ENCODE measurements at regions of chr6 and their contacts with region 1.

Region 1: DNA sequence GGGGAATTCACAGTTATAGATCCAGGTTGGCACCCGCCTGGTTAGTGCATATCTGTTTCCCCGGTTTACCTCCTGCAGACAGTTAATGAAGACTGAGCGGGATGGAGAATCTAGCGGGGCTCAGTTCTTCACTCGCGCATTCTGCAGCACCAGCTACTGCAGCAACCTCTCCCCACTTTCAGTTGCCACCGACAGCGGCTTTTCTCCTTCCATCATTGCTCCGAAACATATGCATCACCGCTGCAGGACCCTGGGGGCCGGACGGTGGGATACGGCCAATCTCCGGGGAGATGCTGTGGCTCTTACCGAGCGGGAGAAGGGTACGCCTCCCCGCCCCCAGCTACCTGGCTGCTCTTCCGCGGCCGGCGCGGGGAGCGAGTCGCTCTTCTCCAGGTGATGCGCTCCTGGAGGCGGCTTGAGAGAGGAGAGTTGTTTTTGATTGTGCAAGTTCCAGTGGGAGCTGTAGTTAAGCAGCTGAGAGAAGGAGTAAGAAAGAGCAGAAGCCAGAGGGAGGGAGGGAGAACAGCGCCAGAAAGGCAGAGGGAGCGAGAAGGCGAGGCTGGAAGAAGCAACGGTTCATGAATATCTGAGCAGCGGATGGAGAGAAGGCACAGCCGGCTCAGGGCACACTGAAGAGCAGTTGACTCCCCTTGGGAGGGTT is at the start of gene SGK1:
- DNase-seq: peak; percentile 43
- H3K4me3 Mint-ChIP-seq: peak within 1 kb of the TSS; percentile 85
- H3K27ac Mint-ChIP-seq: peak within 1 kb of the TSS; percentile 14
- H3K4me1 Mint-ChIP-seq: peaks cover 36% of the 10 kb centered on the region
- H3K27me3 Mint-ChIP-seq: peaks cover 21% of the 10 kb centered on the region
- total RNA-seq, gene SGK1: 202 to 208 TPM

Region 2: GRCh38 chr6:134182528-134182927 is 135.1 kb before region 1 on chr6:
- CTCF ChIA-PET with region 1: no interaction called
- intact Hi-C with region 1: no loop called
- DNase-seq: no peak
- H3K4me3 Mint-ChIP-seq: no peak overlapping the region
- H3K27ac Mint-ChIP-seq: no peak overlapping the region
- H3K4me1 Mint-ChIP-seq: peaks cover 19% of the 10 kb centered on the region
- H3K27me3 Mint-ChIP-seq: no peaks in the 10 kb centered on the region

Region 3: DNA sequence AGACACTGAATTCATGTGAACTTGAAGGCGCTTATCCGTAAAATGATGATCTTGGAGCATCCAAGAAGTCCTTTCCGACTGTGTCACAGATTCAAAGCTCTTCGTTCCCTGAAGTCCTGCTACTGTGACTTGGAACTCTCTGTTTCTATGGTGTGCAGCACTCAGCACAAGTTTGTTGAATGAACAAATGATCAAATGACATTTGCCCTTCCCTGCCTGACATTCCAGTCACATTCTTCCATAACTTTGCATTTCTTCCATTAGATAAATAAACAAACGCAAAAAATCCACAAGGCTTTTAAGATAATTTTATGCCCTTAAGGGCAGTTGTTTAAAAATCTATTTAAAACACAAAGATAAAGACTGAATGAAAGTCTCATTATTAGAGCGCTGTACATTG is 39.6 kb before region 1 on chr6:
- CTCF ChIA-PET with region 1: no interaction called
- intact Hi-C with region 1: loop called (anchors 2 kb)
- DNase-seq: no peak
- H3K4me3 Mint-ChIP-seq: no peak overlapping the region
- H3K27ac Mint-ChIP-seq: no peak overlapping the region
- H3K4me1 Mint-ChIP-seq: peaks cover 25% of the 10 kb centered on the region
- H3K27me3 Mint-ChIP-seq: no peaks in the 10 kb centered on the region

Region 4: DNA sequence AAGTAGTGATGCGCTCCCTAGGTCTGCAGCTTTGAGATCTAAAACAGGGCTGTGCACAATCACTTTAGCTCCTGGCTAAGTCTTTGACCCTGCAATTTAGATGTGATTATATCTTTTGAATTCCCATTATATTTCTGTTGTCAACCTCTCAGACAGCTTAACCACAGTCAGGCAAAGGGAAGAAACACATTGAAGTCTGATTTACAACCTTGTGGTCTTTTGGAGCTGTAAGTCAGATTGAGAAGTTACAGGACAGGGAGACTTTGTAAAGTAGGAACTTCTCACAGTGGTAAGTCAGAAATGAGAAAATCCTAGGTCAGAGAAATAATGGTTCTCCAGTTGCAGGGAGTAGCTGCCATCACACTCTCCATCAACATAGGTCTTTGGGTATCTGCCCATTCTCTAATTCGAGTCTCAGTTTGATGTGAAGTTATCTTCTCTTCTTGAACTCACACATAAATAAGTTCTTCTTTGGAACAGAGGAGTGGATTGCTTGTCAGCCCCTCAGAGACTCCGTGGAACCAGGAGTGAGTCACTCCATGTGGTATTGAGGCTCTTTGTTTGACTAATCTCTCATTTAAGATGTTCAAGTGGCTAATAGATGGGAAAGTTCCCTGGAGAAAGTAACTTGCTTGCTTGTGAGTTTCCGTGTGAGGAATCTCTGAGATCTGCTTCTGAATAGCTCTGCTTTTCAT is 35.3 kb after region 1 on chr6:
- CTCF ChIA-PET with region 1: no interaction called
- intact Hi-C with region 1: loop called (anchors 1 kb)
- DNase-seq: peak; percentile 53
- H3K4me3 Mint-ChIP-seq: no peak overlapping the region
- H3K27ac Mint-ChIP-seq: no peak overlapping the region
- H3K4me1 Mint-ChIP-seq: peaks cover 29% of the 10 kb centered on the region
- H3K27me3 Mint-ChIP-seq: no peaks in the 10 kb centered on the region